Psoas muscle (tissue), 8 donors: ENCODE measurements at regions of chr1 and their contacts with region 1.

Region 1: DNA sequence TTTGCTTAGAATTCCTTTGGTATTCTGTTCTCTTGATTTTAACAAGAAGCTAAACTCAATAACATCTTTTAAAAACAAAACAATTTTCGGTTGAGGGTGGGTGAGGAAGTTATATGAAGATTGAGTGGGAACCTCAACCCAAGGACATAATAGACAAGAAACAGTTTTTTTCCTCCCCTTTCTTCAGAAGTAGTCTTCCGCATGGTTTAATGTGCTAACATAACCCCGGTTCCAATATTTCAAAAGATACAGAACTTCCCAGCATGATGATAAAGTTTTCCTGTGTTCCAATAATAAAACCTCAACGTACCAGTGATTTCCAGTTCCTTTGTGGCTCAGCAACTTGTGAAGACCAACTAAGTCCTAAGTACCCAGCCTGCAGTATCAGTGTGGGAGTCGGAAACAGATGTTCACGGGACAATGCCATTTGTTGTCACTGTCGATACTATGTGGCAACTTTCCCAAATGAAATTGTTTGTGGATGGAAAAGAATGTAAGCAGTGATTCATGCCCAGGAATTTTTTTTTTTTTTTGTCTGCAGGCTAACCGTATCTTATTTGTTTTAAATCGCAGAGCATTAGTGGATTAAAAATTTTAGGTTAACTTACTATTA is 48.5 kb downstream of the NR5A2 start:
- DNase-seq: no peak
- ATAC-seq: peak in 1 of 4 donors; percentile 46
- H3K4me3 ChIP-seq: no peak overlapping the region
- H3K27ac ChIP-seq: no peak overlapping the region
- H3K4me1 ChIP-seq: peaks cover 11% of the 10 kb centered on the region
- H3K27me3 ChIP-seq: no peaks in the 10 kb centered on the region
- CTCF ChIP-seq: no peak

Region 2: DNA sequence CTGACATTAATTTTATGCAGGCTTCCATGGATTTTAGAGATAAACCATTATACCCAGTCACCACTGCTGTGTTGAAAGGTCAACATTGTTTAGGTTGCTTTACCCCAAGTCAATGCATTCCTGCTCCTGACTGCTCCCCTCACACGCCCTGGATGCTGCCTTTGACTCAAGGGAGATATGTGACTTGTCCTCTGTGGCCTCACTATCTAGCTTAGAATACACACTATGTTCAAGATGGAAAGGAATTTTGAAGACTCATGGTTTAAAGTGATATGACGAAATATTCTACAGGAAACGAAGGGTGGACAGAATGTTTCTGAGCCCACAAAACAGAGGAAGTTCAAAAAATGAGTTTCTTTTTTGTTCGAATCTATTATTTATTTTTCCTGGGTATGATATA is 218.9 kb before region 1 on chr1:
- intact Hi-C with region 1: no loop called
- DNase-seq: no peak
- ATAC-seq: no peak
- H3K4me3 ChIP-seq: no peak overlapping the region
- H3K27ac ChIP-seq: no peak overlapping the region
- H3K4me1 ChIP-seq: no peaks in the 10 kb centered on the region
- H3K27me3 ChIP-seq: peaks cover 0 to 4% (median 0%) of the 10 kb centered on the region in 3 donors
- CTCF ChIP-seq: no peak

Region 3: DNA sequence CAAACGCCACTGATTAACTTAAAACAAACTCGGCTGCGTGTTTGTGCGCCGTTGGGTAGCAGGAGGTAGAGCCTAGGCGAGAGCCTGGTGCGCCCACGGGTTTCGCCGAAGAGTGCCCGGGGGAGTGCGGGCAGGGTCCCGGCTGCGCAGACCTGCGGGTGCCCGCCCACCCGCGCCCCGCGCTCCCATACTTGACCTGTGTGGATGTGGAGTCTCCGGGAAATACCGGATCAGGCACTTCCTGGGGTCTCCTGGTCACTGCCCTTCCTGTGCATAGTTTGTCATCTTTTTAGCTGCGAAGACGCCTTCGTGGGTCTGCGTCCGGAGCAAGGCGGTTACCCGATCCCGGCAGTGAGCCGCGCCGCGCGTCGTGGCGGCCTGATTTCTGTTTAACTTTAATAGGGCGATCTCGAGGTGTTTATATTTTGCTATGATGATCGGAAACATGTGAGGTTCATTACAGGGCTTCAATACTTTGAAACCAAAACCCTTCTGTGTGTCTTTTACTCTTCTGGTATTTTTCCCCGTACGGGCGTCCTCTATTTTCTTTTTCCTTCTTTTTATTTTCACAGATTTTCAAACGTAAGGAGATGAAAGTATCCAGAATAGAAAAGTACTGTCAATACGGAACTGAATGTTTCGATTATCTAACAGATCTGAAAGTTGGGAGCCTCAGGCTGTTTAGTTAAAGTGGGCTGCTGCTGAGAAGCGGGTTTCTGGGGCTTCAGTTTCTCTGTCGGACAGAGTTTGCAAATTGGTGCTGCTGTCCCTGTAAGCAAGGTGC is 33.3 kb before region 1 on chr1:
- intact Hi-C with region 1: loop called in 1 of 2 experiments (anchors 1 kb)
- DNase-seq: no peak
- ATAC-seq: no peak
- H3K4me3 ChIP-seq: peak overlapping the region; percentile 50
- H3K27ac ChIP-seq: peak overlapping the region; percentile 1
- H3K4me1 ChIP-seq: peaks cover 16% of the 10 kb centered on the region
- H3K27me3 ChIP-seq: peaks cover 3 to 85% (median 40%) of the 10 kb centered on the region in 3 donors
- CTCF ChIP-seq: no peak